Lower leg skin (tissue), 4 donors: ENCODE measurements at regions of chr15 and their contacts with region 1.

Region 1: DNA sequence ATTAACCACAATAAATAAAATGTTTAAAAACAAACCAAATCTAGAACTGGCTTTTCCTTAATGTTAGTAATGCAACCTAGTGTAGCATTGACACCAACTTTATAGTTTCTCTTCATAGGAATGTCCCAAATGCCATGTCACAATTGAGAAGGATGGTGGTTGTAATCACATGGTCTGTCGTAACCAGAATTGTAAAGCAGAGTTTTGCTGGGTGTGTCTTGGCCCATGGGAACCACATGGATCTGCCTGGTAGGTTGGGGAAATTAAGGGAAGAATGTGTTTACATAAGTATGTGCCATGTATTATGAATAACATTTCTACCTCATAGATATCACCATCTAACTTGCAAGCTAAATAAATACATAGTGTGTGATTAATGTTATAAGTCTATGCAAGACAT is 84.4 kb upstream of the GOLGA6B start:
- DNase-seq: no peak
- H3K4me3 ChIP-seq: no peak overlapping the region
- CTCF ChIP-seq: no peak
- POLR2A ChIP-seq: no peak

Region 2: GRCh38 chr15:72521682-72522081 is 48.4 kb before region 1 on chr15:
- intact Hi-C with region 1: loop called (anchors 10 kb)
- DNase-seq: no peak
- H3K4me3 ChIP-seq: no peak overlapping the region
- CTCF ChIP-seq: no peak
- POLR2A ChIP-seq: no peak